Gastrocnemius medialis (tissue), 4 donors: ENCODE measurements at regions of chr19 and their contacts with region 1.

Region 1: GRCh38 chr19:33373701-33374421 is at the start of gene CEBPG:
- DNase-seq: peak in 1 of 2 donors; percentile 67
- ATAC-seq: peak; percentile 68 to 73
- H3K4me3 ChIP-seq: peak within 1 kb of the TSS; percentile 63 to 88 (median 72)
- H3K27ac ChIP-seq: peak within 1 kb of the TSS; percentile 89 to 99 (median 94)
- H3K4me1 ChIP-seq: peaks cover 40 to 41% of the 10 kb centered on the region in 2 donors
- H3K27me3 ChIP-seq: no peaks in the 10 kb centered on the region
- CTCF ChIP-seq: peak; percentile 35 to 54 (median 51)
- POLR2A ChIP-seq: peak; percentile 93 to 94
- total RNA-seq, gene CEBPG: 44.2 to 50.1 (median 46.1) TPM

Region 2: GRCh38 chr19:32580901-32581703 is 792.8 kb before region 1 on chr19 and contains the start of gene PDCD5:
- in situ Hi-C with region 1: no loop called
- intact Hi-C with region 1: loop called (anchors 10 kb)
- DNase-seq: peak; percentile 92 to 94
- ATAC-seq: peak; percentile 93 to 95
- H3K4me3 ChIP-seq: peak within 1 kb of the TSS; percentile 70 to 94 (median 78)
- H3K27ac ChIP-seq: peak within 1 kb of the TSS; percentile 79 to 92 (median 86)
- H3K4me1 ChIP-seq: peaks cover 7 to 11% of the 10 kb centered on the region in 2 donors
- H3K27me3 ChIP-seq: no peaks in the 10 kb centered on the region
- CTCF ChIP-seq: no peak
- POLR2A ChIP-seq: peak; percentile 83 to 84
- total RNA-seq, gene PDCD5: 121 to 201 (median 170) TPM

Region 3: DNA sequence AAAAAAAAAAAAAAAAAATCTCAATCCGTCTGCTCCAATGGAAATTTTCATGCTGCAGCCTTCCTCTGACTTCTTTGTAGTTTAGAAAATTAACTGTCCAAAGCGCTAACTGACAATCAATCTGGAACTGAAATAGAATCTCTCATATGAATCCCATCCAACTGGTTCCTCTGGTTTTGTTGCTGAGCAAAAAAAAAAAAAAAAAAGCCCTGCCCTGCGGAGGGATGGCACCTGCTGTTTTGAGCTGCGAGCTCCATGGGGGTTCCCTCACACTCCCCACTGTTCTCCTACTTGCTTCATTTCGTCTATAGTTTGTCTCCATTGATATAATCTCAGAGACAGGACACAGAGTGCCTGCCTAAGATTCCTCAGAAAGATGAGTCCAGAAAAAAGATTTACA is 368.4 kb before region 1 on chr19:
- in situ Hi-C with region 1: no loop called
- intact Hi-C with region 1: no loop called
- DNase-seq: no peak
- ATAC-seq: no peak
- H3K4me3 ChIP-seq: no peak overlapping the region
- H3K27ac ChIP-seq: no peak overlapping the region
- H3K4me1 ChIP-seq: no peaks in the 10 kb centered on the region
- H3K27me3 ChIP-seq: no peaks in the 10 kb centered on the region
- CTCF ChIP-seq: no peak
- POLR2A ChIP-seq: no peak

Region 4: DNA sequence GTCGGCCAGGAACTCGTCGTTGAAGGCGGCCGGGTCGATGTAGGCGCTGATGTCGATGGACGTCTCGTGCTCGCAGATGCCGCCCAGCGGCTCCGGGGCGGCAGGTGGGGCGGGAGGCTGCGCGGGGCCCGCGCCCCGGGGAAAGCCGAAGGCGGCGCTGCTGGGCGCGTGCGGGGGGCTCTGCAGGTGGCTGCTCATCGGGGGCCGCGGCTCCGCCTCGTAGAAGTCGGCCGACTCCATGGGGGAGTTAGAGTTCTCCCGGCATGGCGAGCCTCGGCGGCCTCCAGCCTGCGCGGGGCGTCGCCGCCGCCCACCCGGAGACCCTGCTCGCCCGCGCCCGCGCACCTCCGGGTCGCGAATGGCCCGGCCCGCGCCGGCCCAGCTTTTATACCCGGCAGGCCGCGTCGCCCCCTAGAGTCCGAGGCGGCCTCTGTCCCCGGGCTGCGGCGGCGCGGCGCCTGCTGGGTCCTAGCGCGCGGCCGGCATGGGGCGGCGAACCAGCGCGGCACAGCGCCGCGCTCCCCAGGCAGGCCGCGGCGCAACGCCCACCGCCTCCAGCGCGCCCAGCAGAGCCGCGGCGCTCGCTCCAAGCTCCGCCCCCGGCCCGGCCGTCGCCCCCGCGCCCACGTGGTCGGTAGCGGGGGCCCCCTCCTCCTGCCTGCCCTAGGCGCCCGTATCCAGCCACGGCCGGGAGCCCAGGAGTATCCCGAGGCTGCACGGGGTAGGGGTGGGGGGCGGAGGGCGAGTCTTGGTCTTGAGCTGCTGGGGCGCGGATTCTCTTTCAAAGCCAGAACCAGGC is 71.5 kb before region 1 on chr19 and contains the start of gene CEBPA:
- in situ Hi-C with region 1: no loop called
- intact Hi-C with region 1: loop called (anchors 1 kb)
- DNase-seq: peak; percentile 72 to 81
- ATAC-seq: peak; percentile 61 to 67
- H3K4me3 ChIP-seq: peak within 1 kb of the TSS; percentile 80 to 93 (median 84)
- H3K27ac ChIP-seq: peak within 1 kb of the TSS; percentile 92 to 99 (median 96)
- H3K4me1 ChIP-seq: peaks cover 28 to 37% of the 10 kb centered on the region in 2 donors
- H3K27me3 ChIP-seq: no peaks in the 10 kb centered on the region
- CTCF ChIP-seq: peak in 4 of 5 experiments; percentile 67 to 84 (median 80)
- POLR2A ChIP-seq: peak; percentile 99 to 100
- total RNA-seq, gene CEBPA: 11.9 to 29.9 (median 25.5) TPM

Region 5: GRCh38 chr19:33388725-33389420 is 15.0 kb after region 1 on chr19:
- in situ Hi-C with region 1: no loop called
- intact Hi-C with region 1: loop called (anchors 2 kb)
- DNase-seq: peak in 1 of 2 donors; percentile 82
- ATAC-seq: peak; percentile 40 to 63
- H3K4me3 ChIP-seq: peak overlapping the region in 1 of 4 donors; percentile 10
- H3K27ac ChIP-seq: peak overlapping the region; percentile 79 to 87 (median 84)
- H3K4me1 ChIP-seq: peaks cover 77% of the 10 kb centered on the region in 2 donors
- H3K27me3 ChIP-seq: no peaks in the 10 kb centered on the region
- CTCF ChIP-seq: no peak
- POLR2A ChIP-seq: no peak

Region 6: GRCh38 chr19:33496038-33496895 is 122.4 kb after region 1 on chr19:
- in situ Hi-C with region 1: no loop called
- intact Hi-C with region 1: no loop called
- DNase-seq: no peak
- ATAC-seq: no peak
- H3K4me3 ChIP-seq: no peak overlapping the region
- H3K27ac ChIP-seq: no peak overlapping the region
- H3K4me1 ChIP-seq: no peaks in the 10 kb centered on the region
- H3K27me3 ChIP-seq: no peaks in the 10 kb centered on the region
- CTCF ChIP-seq: no peak
- POLR2A ChIP-seq: no peak

Region 7: DNA sequence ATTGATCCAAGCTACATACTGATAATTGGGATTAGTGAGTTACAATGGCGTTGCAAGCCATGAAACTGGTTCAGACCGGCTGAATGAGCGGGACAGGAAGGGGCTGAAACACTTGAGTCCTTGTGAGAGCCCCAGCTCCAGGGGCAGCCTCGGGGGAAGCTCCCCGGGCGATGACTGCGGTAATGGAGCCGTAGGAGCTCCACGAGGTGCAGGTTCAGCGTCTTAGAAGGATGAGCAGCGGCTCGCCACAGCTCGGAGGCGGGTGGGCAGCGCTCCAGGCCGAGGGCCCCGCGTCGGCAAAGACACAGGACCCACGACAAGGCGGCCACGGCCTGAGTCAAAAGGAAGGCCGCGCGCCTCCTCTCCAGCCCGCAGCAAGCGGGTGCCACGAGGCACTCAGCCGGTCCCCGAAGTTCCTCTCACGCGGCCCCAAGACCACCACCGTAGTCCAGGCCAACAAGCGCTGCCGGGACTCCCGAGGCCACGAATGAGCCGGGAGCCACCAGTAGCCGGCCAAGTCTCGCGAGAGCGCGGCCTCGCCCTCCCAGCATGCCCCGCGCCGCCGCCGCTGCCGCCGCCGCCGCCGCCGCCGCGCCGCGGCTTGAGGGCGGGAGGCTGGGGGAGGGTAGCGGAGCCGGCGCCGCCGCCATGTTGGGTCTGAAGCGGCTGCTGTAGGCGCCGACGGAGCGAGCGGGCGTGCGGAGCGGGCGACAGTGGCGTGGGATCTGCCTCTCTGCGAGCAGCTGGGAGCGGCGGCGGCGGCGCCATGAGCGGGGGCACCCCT is 798.2 kb after region 1 on chr19 and contains the start of gene LSM14A:
- in situ Hi-C with region 1: no loop called
- intact Hi-C with region 1: loop called (anchors 2 kb)
- DNase-seq: peak; percentile 79 to 89
- ATAC-seq: peak; percentile 91 to 93
- H3K4me3 ChIP-seq: peak within 1 kb of the TSS; percentile 87 to 94 (median 90)
- H3K27ac ChIP-seq: peak within 1 kb of the TSS; percentile 94 to 98 (median 98)
- H3K4me1 ChIP-seq: peaks cover 43 to 44% of the 10 kb centered on the region in 2 donors
- H3K27me3 ChIP-seq: no peaks in the 10 kb centered on the region
- CTCF ChIP-seq: peak in 1 of 5 experiments; percentile 30
- POLR2A ChIP-seq: peak; percentile 82 to 89
- total RNA-seq, gene LSM14A: 104 to 120 (median 115) TPM